Natural killer cell (primary cell): ENCODE measurements at regions of chr15 and their contacts with region 1.

Region 1: GRCh38 chr15:63371297-63371918 is 10.2 kb downstream of the CA12 start:
- DNase-seq: no peak
- ATAC-seq: no peak
- H3K4me3 ChIP-seq: no peak overlapping the region
- H3K4me3 Mint-ChIP-seq: no peak overlapping the region
- H3K27ac ChIP-seq: no peak overlapping the region
- H3K27ac Mint-ChIP-seq: no peak overlapping the region
- H3K4me1 ChIP-seq: no peaks in the 10 kb centered on the region
- H3K4me1 Mint-ChIP-seq: peaks cover 0 to 5% of the 10 kb centered on the region in 2 donors
- H3K27me3 ChIP-seq: no peaks in the 10 kb centered on the region
- H3K27me3 Mint-ChIP-seq: peaks cover 0 to 1% of the 10 kb centered on the region in 2 donors
- CTCF ChIP-seq: no peak

Region 2: GRCh38 chr15:63350178-63350621 is 21.2 kb before region 1 on chr15:
- intact Hi-C with region 1: loop called (anchors 2 kb)
- DNase-seq: no peak
- ATAC-seq: no peak
- H3K4me3 ChIP-seq: no peak overlapping the region
- H3K4me3 Mint-ChIP-seq: no peak overlapping the region
- H3K27ac ChIP-seq: no peak overlapping the region
- H3K27ac Mint-ChIP-seq: no peak overlapping the region
- H3K4me1 ChIP-seq: no peaks in the 10 kb centered on the region
- H3K4me1 Mint-ChIP-seq: no peaks in the 10 kb centered on the region
- H3K27me3 ChIP-seq: no peaks in the 10 kb centered on the region
- H3K27me3 Mint-ChIP-seq: peaks cover 0 to 4% of the 10 kb centered on the region in 2 donors
- CTCF ChIP-seq: no peak